AG04449 (cell line): ENCODE measurements at regions of chr1 and their contacts with region 1.

Region 1: DNA sequence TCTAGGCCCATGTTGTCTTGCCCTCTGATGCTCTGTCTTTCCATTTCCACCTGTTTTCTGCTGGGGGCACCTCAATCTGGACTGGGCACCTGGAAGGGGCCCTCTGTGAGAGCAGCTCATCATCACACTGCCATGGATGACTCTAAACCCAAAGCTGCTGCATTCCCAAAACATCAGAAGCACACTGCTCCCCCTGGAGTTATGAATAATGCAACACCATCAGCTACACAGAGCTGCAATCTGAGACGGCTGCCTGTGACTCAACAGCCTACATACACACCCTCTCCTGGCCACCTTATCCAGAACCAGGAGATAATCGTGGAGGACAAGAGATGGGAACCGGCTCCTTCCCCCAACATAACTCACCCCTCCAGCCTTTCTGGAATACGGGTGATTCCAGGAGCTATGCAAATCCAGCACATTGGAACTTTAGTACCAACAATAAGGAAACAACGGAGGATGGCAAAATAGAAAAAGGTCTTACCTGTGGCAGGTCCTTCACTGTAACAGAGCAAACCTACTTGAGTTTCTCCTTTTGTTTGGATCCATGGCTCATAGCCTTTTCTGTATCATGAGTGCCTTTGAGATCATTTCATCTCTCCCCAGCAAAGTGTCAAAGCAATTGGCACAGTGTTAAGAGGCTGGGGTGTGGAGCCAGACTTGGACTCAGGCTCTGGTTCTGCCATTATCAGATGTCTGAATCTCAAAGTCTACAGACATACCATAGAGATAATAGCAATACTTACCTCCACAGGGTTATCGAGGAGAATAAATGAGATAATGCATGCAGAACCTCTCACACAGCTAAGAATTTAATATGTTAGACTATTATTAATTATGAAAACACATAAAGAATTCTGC is 29.3 kb downstream of the AK2 start:
- DNase-seq: peak; percentile 65
- H3K4me3 ChIP-seq: no peak overlapping the region
- CTCF ChIP-seq: peak; percentile 75

Region 2: GRCh38 chr1:32919811-32920733 is 87.3 kb before region 1 on chr1:
- CTCF ChIA-PET with region 1: interaction called, 16 read pairs
- POLR2A ChIA-PET with region 1: no interaction called
- DNase-seq: no peak
- H3K4me3 ChIP-seq: no peak overlapping the region
- CTCF ChIP-seq: no peak

Region 3: GRCh38 chr1:32939655-32940371 is 67.6 kb before region 1 on chr1:
- CTCF ChIA-PET with region 1: interaction called, 277 read pairs
- POLR2A ChIA-PET with region 1: interaction called, 3 read pairs
- DNase-seq: peak; percentile 74
- H3K4me3 ChIP-seq: no peak overlapping the region
- CTCF ChIP-seq: no peak

Region 4: DNA sequence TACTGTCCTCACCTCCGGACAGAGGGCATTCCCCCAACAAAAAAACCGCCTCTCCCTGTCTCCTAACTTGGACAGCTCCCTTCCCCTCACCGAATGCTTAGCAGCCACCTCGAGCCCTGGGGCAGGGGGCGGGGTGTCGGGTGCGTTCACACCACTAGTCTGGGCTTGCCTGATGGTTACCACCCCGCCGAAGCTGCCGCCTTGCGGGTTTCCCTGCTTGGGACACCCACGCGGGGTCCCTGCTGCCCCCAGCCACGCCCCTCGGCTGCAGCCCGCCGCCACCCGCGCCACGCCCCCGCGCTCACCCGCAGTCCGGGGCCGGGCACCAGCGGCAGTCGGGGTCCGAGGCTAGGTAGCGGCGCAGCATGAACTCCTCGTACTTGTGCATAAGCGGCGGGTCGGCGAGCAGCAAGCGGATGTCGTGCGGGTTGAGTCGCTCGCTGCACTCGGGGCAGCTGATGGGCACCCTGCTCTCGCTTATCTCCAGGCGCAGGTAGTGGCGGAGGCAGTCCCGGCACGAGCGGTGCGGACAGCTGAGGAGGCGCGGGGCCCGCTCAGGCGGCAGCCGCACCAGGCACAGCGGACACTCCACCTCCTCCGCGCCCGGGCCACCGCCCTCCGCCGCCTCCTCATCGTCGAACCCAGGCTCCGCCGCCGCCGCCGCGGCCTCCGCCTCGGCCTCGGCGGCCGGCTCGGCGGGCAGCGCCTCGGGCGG is 43.5 kb before region 1 on chr1:
- CTCF ChIA-PET with region 1: interaction called, 10 read pairs
- POLR2A ChIA-PET with region 1: interaction called, 9 read pairs
- DNase-seq: no peak
- H3K4me3 ChIP-seq: peak overlapping the region; percentile 87
- CTCF ChIP-seq: no peak

Region 5: DNA sequence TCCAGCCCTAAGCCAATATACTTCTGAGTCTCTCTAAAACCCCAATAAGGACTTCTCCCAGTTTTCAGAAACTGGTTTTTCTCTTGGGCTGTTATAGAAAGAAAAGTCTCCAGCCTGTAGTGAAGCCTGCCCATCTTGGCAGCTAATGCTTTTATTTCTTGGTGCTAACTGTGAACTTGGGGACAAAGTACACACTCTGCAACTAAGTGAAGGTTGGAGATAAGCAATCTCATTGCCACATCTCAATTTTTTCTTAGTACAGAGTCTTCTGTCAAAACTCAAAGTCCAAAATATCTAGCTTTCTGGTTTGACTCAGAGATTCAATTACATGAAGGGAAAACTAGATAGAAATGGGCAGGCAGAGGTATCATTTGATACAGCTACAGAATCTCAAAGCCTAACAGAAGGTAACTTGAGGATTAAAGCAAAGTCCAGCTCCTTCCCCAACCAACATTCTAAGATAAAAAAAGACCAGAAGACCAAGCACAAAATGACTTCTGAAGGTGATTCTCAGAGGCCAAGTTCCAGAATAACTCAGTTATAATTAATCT is 15.3 kb after region 1 on chr1:
- CTCF ChIA-PET with region 1: interaction called, 45 read pairs
- POLR2A ChIA-PET with region 1: no interaction called
- DNase-seq: no peak
- H3K4me3 ChIP-seq: no peak overlapping the region
- CTCF ChIP-seq: no peak

Region 6: DNA sequence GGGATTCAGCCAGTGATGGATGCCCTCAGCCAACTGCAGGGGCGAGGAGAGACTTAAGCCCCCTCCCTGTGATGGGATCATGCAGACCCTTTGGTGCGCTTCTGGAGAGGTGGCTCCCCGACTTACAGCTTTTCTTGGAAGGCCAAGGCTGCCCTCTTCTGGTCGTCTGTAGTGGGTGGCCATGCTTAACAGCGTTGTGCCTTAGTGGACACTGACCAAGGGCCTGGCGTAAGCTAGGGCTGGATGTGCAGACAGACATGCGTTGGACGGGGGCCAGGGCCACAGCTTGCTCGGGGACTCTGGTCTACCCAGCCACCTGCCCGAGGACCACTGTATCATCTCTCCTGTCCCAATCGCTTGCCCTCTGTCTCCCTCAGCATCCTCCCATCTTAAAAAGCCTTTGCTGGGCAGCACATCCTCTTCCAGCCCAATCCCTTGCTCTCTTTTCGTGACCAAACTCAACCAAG is 79.0 kb after region 1 on chr1:
- CTCF ChIA-PET with region 1: interaction called, 29 read pairs
- POLR2A ChIA-PET with region 1: no interaction called
- DNase-seq: no peak
- H3K4me3 ChIP-seq: no peak overlapping the region
- CTCF ChIP-seq: peak; percentile 85